Panc1 (cell line): ENCODE measurements at regions of chr14 and their contacts with region 1.

Region 1: DNA sequence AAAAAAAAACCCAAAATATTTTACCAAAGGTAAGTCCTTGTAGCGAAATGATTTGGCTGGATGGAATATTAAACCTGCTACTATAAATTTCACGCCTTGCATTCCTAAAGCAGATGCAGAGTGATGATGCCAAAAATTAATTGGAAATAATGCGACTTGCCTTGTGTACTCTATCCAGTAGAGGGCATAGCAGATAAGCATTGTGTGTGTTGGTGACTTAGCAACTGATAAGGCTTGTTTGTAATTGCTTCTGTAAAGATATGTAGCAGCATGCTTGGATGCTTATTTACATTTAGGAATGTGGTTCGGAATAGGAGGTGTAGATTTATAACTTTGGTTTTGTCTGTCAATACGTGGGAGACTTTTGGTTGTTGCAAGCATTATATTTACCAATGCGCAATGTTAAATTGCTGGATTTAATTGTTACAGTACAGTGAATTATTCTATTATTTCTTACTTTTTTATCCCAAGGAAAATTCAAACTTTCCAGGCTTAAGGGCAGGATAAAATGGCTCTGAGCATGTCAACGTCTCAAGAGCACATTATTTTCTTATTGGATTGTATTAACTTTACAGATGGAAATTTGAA is 80.5 kb downstream of the TMEM260 start:
- DNase-seq: peak; percentile 5
- ATAC-seq: 0 out of 2 replicates have a peak, but pooled peaks have one; percentile 70
- H3K4me3 ChIP-seq: no peak overlapping the region
- H3K27ac ChIP-seq: no peak overlapping the region
- H3K4me1 ChIP-seq: no peaks in the 10 kb centered on the region
- H3K27me3 ChIP-seq: no peaks in the 10 kb centered on the region; the same call in 1 of the 2 replicates
- CTCF ChIP-seq: peak; percentile 64; the same call in 1 of the 2 replicates

Region 2: DNA sequence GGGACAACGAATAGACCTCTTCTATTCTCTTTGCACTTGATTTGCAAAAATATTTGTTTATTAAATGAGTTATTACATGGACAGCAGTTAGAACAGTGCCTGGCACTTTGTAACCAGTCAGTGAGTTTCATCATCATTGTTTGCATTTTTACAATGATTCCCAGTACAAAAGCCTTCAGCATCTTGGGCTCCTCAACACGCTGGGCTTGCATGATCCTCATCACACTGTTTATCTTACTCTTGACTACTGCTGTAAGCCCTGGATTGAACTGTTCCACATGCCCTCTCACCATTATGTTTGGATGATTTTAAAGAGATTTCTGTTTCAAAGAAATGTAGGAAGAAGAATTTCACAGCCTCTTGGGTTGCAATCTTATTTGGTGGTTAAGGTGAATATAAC is 337.5 kb before region 1 on chr14:
- CTCF ChIA-PET with region 1: no interaction called
- POLR2A ChIA-PET with region 1: no interaction called
- in situ Hi-C with region 1: no loop called
- intact Hi-C with region 1: no loop called
- DNase-seq: no peak
- ATAC-seq: no peak
- H3K4me3 ChIP-seq: no peak overlapping the region
- H3K27ac ChIP-seq: no peak overlapping the region
- H3K4me1 ChIP-seq: no peaks in the 10 kb centered on the region
- H3K27me3 ChIP-seq: peaks cover 2% of the 10 kb centered on the region
- CTCF ChIP-seq: no peak

Region 3: DNA sequence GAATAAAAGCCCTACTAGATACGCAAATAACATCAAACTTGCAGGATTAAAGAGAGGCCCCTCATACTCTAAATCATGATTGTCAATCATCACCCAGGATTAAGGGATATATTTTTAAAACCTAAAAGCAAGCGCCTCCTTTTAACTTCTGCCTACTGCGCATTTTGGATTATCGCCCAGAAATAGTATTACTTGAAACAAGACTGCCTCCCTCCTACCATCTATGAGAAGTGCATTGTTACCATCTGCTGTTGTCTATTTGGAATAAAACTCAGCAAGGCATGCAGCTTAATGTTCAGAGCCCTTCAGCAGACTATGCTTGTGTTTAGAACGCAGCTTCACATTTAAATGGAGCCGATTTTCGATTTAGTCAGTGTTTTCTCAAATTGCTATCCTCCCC is 529.0 kb after region 1 on chr14:
- CTCF ChIA-PET with region 1: no interaction called
- POLR2A ChIA-PET with region 1: no interaction called
- in situ Hi-C with region 1: no loop called
- intact Hi-C with region 1: loop called (anchors 5 kb)
- DNase-seq: no peak
- ATAC-seq: no peak
- H3K4me3 ChIP-seq: no peak overlapping the region
- H3K27ac ChIP-seq: no peak overlapping the region
- H3K4me1 ChIP-seq: no peaks in the 10 kb centered on the region
- H3K27me3 ChIP-seq: peaks cover 7% of the 10 kb centered on the region
- CTCF ChIP-seq: peak; percentile 34; the same call in 1 of the 2 replicates